AG04449 (cell line): ENCODE measurements at regions of chr3 and their contacts with region 1.

Region 1: DNA sequence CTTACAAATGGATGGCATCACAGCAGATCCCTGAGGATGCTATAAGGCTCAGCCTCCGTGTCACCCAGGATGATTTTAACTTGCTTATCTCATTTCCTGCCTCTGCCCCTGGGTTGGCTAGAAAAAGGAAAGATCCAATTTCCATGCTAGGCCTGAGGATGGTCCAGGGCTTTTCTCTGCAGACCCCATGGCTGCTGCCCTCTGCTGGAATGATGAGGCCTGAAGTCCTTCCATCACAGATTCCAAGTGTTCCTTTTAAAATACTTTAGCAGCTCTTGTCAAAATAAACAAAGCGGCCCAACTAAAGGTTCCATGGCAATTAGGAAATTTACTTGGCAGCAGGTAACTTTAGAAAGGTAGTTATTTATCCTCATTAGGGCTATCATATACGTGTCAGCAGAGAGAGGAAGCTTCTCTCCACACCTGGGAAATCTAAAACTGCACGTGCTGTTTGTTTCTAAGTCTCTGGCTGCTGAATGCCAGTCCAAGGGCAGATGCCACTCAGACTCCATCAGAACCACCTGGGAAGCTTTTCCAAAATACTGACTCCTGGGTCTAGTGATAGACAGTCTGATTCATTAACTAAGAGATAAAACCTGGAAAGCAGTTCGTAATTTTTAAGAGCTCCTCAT is 401.9 kb upstream of the IL12A start:
- DNase-seq: no peak
- H3K4me3 ChIP-seq: no peak overlapping the region
- CTCF ChIP-seq: peak; percentile 70

Region 2: DNA sequence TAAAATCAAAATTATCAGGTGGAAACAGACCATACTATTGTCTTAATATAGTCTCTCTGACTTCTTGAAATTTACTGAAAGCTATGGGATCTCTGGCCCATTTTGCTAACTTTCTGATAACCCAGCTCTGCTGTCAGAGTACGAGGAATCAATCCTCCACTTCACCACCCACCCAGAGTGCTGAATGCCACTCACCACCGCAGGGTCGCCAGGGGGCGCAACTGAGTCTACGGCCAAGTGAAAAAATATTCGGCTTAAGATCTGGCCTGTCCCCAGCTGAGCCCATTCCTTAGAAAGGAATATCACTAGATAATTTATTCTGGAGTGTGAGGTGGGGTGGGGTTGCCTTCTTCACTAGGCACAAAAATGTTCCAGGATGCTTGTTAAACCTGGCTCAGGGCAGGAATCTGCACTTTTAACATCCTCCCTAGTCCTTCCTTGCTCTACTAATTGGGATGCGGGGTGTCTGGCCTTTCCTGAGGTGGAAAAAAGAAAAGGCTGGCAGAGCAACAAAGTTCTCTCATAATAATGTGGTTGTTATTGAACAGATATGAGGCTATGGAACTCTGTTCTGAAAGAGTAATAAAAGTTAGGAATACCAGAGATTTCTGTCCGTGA is 264.3 kb before region 1 on chr3:
- CTCF ChIA-PET with region 1: interaction called, 14 read pairs
- POLR2A ChIA-PET with region 1: no interaction called
- DNase-seq: no peak
- H3K4me3 ChIP-seq: no peak overlapping the region
- CTCF ChIP-seq: peak; percentile 77

Region 3: DNA sequence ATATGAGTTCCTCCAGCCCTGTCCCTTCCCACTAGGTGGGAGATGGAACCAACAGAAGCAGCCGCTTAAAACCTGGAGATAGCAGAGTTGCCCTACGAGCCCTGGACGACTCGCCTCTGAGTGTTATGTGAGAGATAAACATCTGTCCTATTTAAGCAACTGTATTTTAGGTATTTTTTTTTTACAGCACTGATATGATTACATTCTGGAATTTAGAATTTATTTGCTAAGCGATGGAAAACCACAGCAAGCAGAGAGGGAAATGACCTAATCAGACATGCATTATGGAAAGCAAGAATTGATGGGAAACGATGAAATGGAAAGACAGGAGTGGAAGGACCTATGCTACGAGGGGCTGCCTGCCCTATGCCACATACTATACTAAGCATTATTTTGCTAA is 22.9 kb after region 1 on chr3:
- CTCF ChIA-PET with region 1: interaction called, 12 read pairs
- POLR2A ChIA-PET with region 1: no interaction called
- DNase-seq: no peak
- H3K4me3 ChIP-seq: no peak overlapping the region
- CTCF ChIP-seq: no peak